ENCODE measurements at regions of chr16 and their contacts with region 1.

Region 1: DNA sequence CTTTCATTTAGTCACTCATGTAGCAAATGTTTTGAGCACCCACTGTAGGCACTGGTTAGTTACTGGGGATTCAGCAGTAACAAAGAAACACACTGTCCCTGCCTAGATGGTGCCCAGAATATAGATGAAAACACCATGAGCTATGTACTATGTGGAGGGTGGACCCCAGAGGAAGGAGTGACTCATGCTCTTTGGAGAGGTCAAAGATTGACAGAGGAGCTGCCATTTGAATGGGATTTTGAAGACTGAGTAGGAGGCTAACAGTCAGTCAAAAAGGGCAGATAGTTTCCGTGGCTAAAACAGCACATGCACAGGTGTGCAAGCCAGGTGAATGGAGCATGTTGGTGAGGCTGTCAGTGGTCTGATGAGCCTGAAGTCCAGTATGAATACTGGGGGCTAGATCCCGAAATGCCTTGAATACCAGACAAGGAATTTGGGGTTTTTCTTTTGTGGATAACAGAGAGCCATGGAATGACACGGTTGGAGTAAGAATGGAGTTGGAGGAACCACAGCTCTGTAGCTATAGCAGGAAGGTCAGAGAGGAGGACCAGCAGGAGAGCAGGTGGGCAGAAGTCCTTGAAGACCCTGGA is 6.1 kb downstream of the IL21R start:
- DNase-seq: peak; percentile 78
- H3K4me3 Mint-ChIP-seq: peak overlapping the region; percentile 98
- H3K27ac Mint-ChIP-seq: peak overlapping the region; percentile 100
- H3K4me1 Mint-ChIP-seq: peaks cover 65% of the 10 kb centered on the region
- H3K27me3 Mint-ChIP-seq: no peaks in the 10 kb centered on the region

Region 2: DNA sequence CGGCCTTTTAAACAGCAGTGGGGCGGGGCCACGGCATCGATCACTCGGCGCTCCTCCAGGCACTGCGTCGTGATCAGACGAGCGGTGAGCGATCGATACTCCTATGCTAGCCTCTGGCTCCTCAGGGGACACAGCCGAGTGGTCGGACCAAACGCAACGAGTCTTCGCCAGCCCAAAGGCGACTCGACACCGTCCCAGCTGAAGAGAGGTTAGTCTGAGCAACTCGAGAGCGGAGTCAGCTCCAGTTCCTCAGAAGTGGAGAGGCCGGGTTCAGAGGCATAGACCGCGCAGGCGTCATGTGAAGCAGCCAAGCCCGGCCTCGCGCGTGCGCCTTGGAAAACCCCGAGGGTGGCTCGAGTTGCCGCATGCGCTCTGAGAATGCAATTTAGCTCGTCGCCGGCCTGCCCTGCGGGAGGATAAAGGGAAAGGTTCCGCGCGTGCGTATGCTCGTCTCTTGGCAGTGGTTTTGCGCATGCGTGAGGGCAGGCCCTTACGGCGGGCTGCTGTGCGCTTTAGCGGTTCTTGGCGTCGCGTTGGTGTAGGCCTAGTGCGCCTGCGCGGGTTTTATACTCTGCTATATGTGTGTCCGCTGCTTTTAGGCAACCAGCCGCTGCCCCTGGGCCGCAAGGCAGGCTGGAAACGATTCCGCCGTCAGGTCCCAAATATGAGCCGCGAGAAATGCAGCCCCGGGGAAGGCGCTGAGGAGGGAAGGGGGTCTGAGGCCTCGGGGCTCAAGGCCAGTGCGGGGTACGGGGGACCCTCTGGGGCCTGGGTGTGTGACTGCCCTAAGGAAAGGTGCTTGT is 204.5 kb before region 1 on chr16 and contains the start of gene KDM8:
- CTCF ChIA-PET with region 1: no interaction called
- intact Hi-C with region 1: loop called (anchors 1 kb)
- DNase-seq: peak; percentile 100
- H3K4me3 Mint-ChIP-seq: peak within 1 kb of the TSS; percentile 99
- H3K27ac Mint-ChIP-seq: peak within 1 kb of the TSS; percentile 100
- H3K4me1 Mint-ChIP-seq: peaks cover 50% of the 10 kb centered on the region
- H3K27me3 Mint-ChIP-seq: no peaks in the 10 kb centered on the region
- total RNA-seq, gene KDM8: 11.3 to 13.9 TPM

Region 3: GRCh38 chr16:27253526-27253930 is 154.6 kb before region 1 on chr16:
- CTCF ChIA-PET with region 1: no interaction called
- intact Hi-C with region 1: loop called (anchors 5 kb)
- DNase-seq: no peak
- H3K4me3 Mint-ChIP-seq: peak overlapping the region; percentile 44
- H3K27ac Mint-ChIP-seq: peak overlapping the region; percentile 92
- H3K4me1 Mint-ChIP-seq: peaks cover 91% of the 10 kb centered on the region
- H3K27me3 Mint-ChIP-seq: no peaks in the 10 kb centered on the region

Region 4: DNA sequence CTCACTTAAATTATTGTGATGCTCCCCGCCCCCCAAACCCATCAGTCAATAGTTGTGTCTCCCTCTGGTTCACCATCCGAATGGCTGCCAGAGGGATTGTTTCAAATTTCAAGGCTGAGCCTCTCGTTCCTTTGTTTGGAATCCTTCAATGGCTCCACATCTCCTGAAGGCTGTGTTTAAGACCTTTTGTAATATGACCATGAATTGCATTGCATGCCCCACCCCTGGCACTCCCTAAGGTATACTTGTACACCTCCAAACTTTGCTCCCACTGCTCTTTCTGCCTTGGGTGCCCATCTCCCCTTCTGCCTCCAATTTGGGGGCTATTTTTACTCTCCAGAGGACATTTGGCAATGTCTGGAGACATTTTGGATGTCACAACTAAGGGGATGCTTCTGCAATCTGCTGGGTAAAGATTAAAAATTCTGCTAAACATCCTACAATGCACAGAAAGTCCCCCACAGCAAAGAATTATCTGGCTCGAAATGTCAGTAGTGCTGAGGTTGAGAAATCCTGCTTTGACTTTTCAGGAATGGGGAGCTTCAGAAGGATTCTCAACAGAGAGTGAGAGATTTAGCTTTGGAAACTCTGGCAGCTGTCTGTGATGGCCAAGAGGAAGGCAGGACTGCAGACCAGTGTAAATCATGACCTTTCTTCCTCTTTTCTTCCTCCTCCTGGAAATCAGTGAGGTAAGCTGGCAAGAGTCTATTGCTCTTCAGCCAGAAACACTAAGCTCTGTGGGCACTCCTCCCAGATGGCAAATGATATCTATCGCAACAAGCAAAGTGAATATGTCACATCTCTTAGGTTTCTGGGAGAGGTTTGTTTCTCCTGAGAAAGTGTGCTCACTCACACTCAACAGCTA is 103.0 kb before region 1 on chr16:
- CTCF ChIA-PET with region 1: no interaction called
- intact Hi-C with region 1: no loop called
- DNase-seq: no peak
- H3K4me3 Mint-ChIP-seq: no peak overlapping the region
- H3K27ac Mint-ChIP-seq: no peak overlapping the region
- H3K4me1 Mint-ChIP-seq: peaks cover 3% of the 10 kb centered on the region
- H3K27me3 Mint-ChIP-seq: no peaks in the 10 kb centered on the region

Region 5: GRCh38 chr16:27374804-27375425 is 33.2 kb before region 1 on chr16:
- CTCF ChIA-PET with region 1: interaction called, 12 read pairs
- intact Hi-C with region 1: loop called (anchors 1 kb)
- DNase-seq: peak; percentile 81
- H3K4me3 Mint-ChIP-seq: no peak overlapping the region
- H3K27ac Mint-ChIP-seq: no peak overlapping the region
- H3K4me1 Mint-ChIP-seq: peaks cover 47% of the 10 kb centered on the region
- H3K27me3 Mint-ChIP-seq: no peaks in the 10 kb centered on the region

Region 6: DNA sequence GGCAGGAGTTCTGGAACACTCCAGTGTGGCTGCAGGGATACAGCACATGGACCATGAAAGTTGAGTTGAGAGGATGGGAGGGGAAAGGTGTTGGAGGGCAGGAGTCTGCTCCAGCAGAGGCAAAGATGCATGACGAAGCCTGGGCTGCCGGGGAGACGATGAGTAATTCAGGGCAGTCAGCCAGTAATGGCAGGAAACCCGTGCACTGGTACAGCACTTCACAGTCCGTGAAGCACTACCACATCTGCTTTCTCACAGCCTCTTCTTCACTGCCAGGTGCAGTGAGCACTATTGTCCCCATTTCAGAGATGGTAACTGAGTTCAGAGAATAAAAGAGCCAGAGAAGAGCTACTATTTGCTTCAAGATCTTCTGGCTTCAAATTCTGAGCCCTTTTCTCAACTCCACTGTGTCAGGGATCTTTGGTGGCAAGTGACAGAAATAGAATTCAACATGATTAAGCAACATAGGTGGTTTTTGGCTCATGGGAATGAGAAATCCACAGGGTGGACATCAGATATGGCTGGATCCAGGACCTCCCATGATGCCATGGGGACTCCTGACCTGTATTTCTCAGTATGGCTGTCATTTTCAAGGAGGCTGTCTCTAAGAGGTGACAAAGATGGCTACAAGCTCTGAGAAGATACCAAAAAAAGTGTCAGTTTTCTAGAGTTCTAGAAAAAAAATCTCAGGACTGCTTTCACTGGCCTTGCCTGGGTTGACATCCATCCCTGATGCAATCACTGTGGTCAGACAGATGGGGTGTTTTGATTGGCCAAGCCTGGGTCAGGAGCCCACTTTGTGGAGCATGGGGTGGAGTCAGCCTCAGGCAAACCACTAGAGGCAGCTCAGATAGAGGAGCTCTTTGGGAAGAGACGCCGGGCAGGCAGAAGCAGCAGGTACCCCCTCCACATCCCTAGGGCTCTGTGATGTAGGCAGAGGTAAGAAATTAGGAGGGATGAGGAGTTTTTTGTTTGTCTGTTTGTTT is 18.6 kb after region 1 on chr16:
- CTCF ChIA-PET with region 1: interaction called, 4 read pairs
- intact Hi-C with region 1: loop called (anchors 1 kb)
- DNase-seq: peak; percentile 94
- H3K4me3 Mint-ChIP-seq: peak overlapping the region; percentile 29
- H3K27ac Mint-ChIP-seq: peak overlapping the region; percentile 92
- H3K4me1 Mint-ChIP-seq: peaks cover 83% of the 10 kb centered on the region
- H3K27me3 Mint-ChIP-seq: no peaks in the 10 kb centered on the region

Region 7: GRCh38 chr16:27449434-27450195 is 41.5 kb after region 1 on chr16:
- CTCF ChIA-PET with region 1: interaction called, 8 read pairs
- intact Hi-C with region 1: loop called (anchors 1 kb)
- DNase-seq: peak; percentile 92
- H3K4me3 Mint-ChIP-seq: peak overlapping the region; percentile 61
- H3K27ac Mint-ChIP-seq: peak overlapping the region; percentile 94
- H3K4me1 Mint-ChIP-seq: peaks cover 86% of the 10 kb centered on the region
- H3K27me3 Mint-ChIP-seq: no peaks in the 10 kb centered on the region

Region 8: DNA sequence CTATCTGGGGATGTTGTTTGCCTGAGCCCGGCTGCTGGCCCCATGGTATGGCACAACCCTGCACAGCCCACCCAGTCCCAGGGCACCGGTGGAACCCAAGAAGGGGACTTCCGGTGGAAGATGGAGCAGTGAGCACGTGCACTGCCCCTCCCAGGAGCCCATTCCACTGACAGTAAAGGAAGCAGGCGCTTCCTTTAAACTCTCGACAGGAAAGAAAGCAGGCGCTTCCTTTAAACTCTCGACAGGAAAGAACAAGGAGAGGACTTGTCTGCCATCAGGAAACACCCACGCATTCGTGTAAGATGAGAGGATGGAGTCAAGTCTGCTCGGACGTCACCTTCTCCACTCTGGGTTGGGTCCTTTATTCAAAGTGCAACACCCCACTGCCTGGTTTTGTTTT is 47.6 kb after region 1 on chr16:
- CTCF ChIA-PET with region 1: interaction called, 8 read pairs
- intact Hi-C with region 1: loop called (anchors 2 kb)
- DNase-seq: peak; percentile 80
- H3K4me3 Mint-ChIP-seq: no peak overlapping the region
- H3K27ac Mint-ChIP-seq: peak overlapping the region; percentile 83
- H3K4me1 Mint-ChIP-seq: peaks cover 64% of the 10 kb centered on the region
- H3K27me3 Mint-ChIP-seq: no peaks in the 10 kb centered on the region

Measured in activated naive CD4-positive, alpha-beta T cell treated with anti-CD3 and anti-CD28 coated beads for 36 hours (primary cell).